Uterus (tissue), 4 donors: ENCODE measurements at regions of chr2 and their contacts with region 1.

Region 1: DNA sequence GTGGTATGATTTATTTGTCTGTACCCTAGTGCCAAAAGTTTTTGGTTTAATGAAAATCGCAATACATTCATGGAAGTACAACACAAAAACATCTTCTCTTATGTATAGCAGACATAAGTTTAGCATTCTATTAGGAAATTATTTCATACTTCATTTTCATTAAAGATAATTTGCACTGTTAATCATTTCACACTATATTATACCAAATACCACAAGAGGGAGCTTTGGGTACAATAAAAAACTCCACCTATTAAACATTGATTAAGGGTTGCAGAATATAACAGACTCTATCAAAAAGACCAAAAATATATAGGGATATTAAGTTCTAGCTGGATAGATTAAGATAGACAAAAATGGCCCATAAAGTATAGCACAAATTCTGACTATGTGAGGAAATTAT is 79.0 kb downstream of the SLC66A3 start:
- DNase-seq: no peak
- H3K4me3 ChIP-seq: no peak overlapping the region
- H3K27ac ChIP-seq: no peak overlapping the region
- H3K4me1 ChIP-seq: no peaks in the 10 kb centered on the region
- H3K27me3 ChIP-seq: no peaks in the 10 kb centered on the region
- CTCF ChIP-seq: peak; percentile 52 to 69 (median 57)
- POLR2A ChIP-seq: no peak

Region 2: DNA sequence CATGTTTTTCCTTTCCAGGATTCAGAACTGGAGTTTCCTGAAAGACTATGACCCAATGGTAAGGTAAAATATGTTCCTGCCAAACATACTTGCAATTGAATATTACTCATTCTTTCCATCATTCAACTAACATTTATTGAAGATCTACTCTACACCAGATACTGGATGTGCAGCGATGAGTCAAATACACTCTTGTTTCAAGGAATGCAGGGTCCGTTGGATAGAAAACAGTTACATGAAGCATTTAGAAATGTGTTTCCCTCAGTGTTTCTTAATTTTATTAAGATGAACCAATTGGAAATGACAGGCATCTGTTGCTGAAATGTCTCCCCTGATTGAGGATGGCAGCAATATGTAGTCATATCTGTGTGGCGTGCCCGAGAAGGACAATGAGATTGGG is 93.8 kb before region 1 on chr2:
- intact Hi-C with region 1: no loop called
- DNase-seq: no peak
- H3K4me3 ChIP-seq: no peak overlapping the region
- H3K27ac ChIP-seq: no peak overlapping the region
- H3K4me1 ChIP-seq: no peaks in the 10 kb centered on the region
- H3K27me3 ChIP-seq: no peaks in the 10 kb centered on the region
- CTCF ChIP-seq: no peak
- POLR2A ChIP-seq: no peak

Region 3: DNA sequence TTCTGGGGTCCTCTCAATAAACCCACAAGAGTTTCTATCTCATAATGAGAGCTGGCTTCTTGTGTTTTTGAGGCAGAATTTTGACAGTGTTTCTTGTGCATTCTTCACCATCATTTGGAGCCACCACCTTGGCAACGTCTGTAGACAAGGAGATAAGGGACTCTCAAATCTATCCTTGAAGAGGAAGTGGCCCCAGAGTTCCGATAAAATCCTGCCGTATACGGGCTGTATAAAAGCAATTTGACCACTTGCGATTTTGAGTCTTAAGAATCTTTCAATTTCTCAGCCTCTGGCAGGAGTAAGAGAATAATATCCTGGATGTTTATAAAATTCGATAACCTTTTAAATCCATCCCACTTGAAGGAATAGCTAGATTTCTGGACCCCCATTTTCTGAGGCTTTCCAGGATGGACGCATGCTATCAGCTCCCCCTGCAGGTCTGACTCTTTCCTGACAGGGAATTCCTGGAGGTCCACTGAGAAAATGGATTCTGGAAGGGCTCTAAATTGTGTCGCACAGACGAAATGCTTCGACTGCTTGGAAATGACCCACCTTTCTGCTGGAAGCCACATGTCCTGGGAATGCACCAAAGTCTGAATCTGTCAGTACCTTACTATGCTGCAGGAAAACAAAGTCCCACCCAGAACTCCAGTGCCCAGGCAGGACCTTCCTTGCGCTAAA is 177.6 kb after region 1 on chr2:
- intact Hi-C with region 1: loop called (anchors 5 kb)
- DNase-seq: peak; percentile 49 to 54
- H3K4me3 ChIP-seq: peak overlapping the region in 1 of 2 donors; percentile 27
- H3K27ac ChIP-seq: peak overlapping the region in 1 of 2 donors; percentile 20
- H3K4me1 ChIP-seq: peaks cover 4 to 6% of the 10 kb centered on the region in 2 donors
- H3K27me3 ChIP-seq: no peaks in the 10 kb centered on the region
- CTCF ChIP-seq: peak; percentile 77 to 84 (median 82)
- POLR2A ChIP-seq: no peak

Region 4: DNA sequence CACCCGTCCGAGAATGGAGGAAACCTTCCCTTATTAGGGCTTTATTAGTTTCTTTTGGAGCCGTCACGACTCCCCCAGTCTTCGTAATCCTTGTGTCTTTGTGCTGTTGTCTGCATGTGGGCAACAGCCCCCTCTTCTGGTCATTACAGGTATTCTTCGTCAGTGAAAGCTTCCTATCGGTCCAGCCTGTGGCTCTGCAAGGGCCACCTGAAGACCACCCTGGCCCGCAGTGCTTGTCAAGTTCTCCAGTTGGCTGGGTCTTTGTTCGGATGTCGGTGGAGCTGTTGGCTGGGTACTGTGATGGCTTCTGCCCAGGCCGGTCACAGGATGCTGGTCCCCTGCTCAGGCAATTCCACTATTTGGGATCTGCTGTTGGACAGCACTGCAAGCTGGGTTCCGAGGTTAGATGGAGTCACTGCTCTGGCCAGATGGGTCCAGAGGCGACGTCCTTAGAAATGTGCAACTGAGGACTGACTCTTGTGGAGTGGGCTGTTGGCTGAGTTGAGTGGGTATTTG is 212.5 kb after region 1 on chr2:
- intact Hi-C with region 1: loop called (anchors 10 kb)
- DNase-seq: peak; percentile 59 to 73
- H3K4me3 ChIP-seq: no peak overlapping the region
- H3K27ac ChIP-seq: peak overlapping the region in 1 of 2 donors; percentile 38
- H3K4me1 ChIP-seq: no peaks in the 10 kb centered on the region
- H3K27me3 ChIP-seq: no peaks in the 10 kb centered on the region
- CTCF ChIP-seq: peak; percentile 76 to 84 (median 80)
- POLR2A ChIP-seq: no peak